GM18951 (cell line): ENCODE measurements at regions of chr4 and their contacts with region 1.

Region 1: GRCh38 chr4:122922877-122923511 is 597 bp upstream of the NUDT6 start:
- POLR2A ChIP-seq: peak; percentile 51

Region 2: DNA sequence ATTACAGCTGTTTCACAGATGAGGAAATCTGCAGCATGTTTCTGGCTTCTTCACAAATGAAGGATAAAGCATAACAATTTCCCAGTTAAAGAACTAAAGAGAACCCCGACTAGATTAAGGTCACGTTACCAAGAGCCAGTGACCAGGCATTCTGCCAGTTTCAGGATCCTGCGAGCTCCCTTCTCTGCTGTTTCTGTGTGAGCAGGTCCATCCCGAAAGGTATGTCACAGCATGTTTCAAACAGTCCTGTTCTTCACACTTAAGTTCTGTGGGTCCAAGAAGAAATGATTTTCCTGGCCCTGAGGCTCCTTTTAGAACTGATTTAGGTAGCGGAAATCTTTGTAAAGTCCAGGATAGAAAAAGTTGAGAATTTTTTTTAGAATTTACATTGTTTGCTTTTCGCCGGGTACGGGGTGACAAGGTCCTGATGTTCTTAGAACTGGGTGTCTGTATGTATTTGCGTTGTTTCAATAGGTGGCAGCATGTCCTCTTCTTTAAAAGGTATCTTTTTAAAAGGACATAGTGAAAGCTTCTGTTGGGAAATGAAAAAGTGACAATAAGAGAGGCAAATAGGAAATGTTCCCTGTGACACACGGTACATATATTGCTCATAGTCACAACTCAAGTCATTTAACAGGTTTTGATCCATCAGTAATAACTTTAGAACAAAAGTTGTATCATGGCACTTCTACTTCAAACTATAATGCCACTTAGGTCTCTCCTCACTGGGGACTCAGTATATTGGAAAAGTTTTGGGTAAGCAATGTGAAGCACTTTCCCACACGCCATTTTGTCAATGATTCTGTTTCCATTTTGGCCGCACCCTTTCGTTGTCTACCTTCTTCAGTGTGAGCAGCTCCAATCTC is 320.5 kb before region 1 on chr4:
- in situ Hi-C with region 1: loop called (anchors 25 kb)
- POLR2A ChIP-seq: no peak

Region 3: GRCh38 chr4:122636697-122637096 is 286.3 kb before region 1 on chr4:
- in situ Hi-C with region 1: no loop called
- POLR2A ChIP-seq: no peak